Posterior cingulate gyrus (tissue), 11 donors: ENCODE measurements at regions of chr19 and their contacts with region 1.

Region 1: GRCh38 chr19:17052439-17053210 is 22.6 kb downstream of the HAUS8 start:
- DNase-seq: peak in 6 of 10 donors; percentile 30 to 82 (median 40)

Region 2: DNA sequence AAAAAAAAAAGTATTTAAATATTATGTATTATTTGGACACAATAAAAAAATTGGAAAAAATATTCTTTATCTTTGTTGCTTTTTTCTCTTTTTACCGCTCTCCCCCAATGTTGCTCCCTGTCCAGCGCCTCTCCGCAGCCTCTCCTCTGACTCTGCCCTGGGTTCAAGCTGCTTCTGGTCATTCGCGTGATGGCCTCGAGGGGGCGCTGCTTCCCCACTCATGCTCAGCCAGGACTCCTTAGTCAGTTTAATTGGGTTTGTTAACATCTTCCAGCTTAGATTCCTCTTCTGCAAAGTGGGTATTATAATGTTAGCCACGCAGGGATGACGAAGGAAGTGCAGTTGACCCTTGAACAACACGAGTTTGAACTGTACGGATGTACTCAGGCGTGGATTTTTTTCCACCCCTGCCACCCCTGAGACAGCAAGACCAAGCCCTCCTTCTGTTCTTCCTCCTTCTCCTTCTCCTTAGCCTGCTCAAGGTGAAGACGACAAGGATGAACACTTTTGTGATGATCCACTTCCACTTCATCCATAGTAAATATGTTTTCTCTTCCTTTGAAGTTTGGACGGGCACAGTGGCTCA is 337.8 kb before region 1 on chr19:
- intact Hi-C with region 1: loop called (anchors 2 kb)
- DNase-seq: peak; percentile 48 to 96 (median 70)

Region 3: GRCh38 chr19:16771618-16772017 is 281.0 kb before region 1 on chr19:
- intact Hi-C with region 1: loop called (anchors 2 kb)
- DNase-seq: peak in 7 of 10 donors; percentile 17 to 90 (median 71)

Region 4: GRCh38 chr19:16778796-16779411 is 273.7 kb before region 1 on chr19:
- intact Hi-C with region 1: loop called (anchors 2 kb)
- DNase-seq: peak in 5 of 10 donors; percentile 12 to 89 (median 36)

Region 5: DNA sequence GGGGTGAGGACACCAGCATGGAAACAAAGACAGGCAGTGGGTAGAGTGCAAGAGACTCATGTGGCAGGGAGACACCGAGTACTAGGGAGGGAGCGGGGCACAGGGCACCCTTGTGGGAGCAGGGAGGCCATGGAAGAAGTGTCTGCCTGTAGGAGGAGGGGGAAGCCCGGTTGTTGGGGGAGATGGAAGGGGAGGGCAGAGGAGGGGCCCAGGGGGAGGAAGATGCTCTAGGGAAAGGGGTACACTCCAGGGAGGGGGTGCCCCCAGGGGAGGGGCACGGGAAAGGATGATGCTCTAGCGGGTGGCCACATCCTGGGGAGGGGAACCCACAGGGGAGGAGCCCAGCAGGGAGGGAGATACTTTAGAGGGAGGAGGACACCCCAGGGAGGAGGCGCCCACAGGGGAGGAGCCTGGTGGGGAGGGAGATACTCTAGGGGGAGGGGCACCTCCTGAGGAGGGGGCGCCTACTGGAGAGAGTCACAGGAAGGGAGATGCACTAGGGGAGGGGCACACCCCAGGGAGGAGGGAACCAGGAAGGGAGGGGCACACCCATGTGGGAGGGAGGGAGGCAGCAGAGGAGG is 50.9 kb before region 1 on chr19:
- intact Hi-C with region 1: no loop called
- DNase-seq: peak in 2 of 10 donors; percentile 39 to 64

Region 6: GRCh38 chr19:17021793-17022583 is 30.6 kb before region 1 on chr19:
- intact Hi-C with region 1: no loop called
- DNase-seq: no peak

Region 7: GRCh38 chr19:17135001-17135853 is 82.6 kb after region 1 on chr19:
- intact Hi-C with region 1: no loop called
- DNase-seq: peak; percentile 45 to 94 (median 63)